H1 (cell line): ENCODE measurements at regions of chr7 and their contacts with region 1.

Region 1: GRCh38 chr7:155380221-155380861 is 77.6 kb upstream of the EN2 start:
- DNase-seq: peak in 1 of 2 experiments; percentile 81
- H3K4me3 ChIP-seq: no peak overlapping the region
- H3K27ac ChIP-seq: no peak overlapping the region
- H3K4me1 ChIP-seq: peaks cover 0 to 16% (median 9%) of the 10 kb centered on the region in 4 experiments; a peak in 5 of 7 replicates
- H3K27me3 ChIP-seq: peaks cover 92 to 97% (median 96%) of the 10 kb centered on the region in 4 experiments
- CTCF ChIP-seq: peak; percentile 61 to 79 (median 74)
- EP300 ChIP-seq: no peak
- POLR2A ChIP-seq: no peak
- RAD21 ChIP-seq: peak; percentile 69 to 71

Region 2: DNA sequence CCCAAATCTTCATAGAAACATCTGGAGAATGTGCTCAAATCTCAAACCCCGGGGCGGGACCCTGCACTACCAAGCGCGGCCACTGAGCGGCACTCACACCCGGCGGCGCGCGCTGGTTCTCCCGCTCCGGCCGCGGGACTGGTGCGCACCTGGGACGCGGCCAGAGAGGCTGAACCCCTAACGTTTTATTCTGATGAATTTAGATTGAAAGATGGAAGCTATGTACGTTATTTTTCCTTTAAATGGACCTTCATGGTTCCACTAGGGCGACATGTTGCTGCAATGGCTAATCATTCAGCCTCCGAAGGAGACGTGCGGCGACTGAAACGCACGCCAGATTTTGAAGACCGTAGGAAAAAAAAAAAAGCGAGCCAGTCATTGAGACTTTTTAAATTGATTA is 189.7 kb before region 1 on chr7:
- CTCF ChIA-PET with region 1: no interaction called
- POLR2A ChIA-PET with region 1: no interaction called
- DNase-seq: peak in 1 of 2 experiments; percentile 95
- H3K4me3 ChIP-seq: peak overlapping the region in 1 of 4 experiments; percentile 33; a peak in 1 of 8 replicates
- H3K27ac ChIP-seq: no peak overlapping the region
- H3K4me1 ChIP-seq: no peaks in the 10 kb centered on the region; a peak in 1 of 7 replicates
- H3K27me3 ChIP-seq: peaks cover 0 to 3% (median 0%) of the 10 kb centered on the region in 4 experiments; a peak in 1 of 7 replicates
- CTCF ChIP-seq: peak; percentile 73 to 86 (median 85)
- EP300 ChIP-seq: no peak
- POLR2A ChIP-seq: no peak
- RAD21 ChIP-seq: peak; percentile 79 to 93

Region 3: GRCh38 chr7:155392726-155393570 is 12.6 kb after region 1 on chr7:
- CTCF ChIA-PET with region 1: interaction called, 18 read pairs
- POLR2A ChIA-PET with region 1: no interaction called
- DNase-seq: no peak
- H3K4me3 ChIP-seq: no peak overlapping the region
- H3K27ac ChIP-seq: no peak overlapping the region
- H3K4me1 ChIP-seq: no peaks in the 10 kb centered on the region
- H3K27me3 ChIP-seq: no peaks in the 10 kb centered on the region; a peak in 2 of 7 replicates
- CTCF ChIP-seq: no peak
- EP300 ChIP-seq: no peak
- POLR2A ChIP-seq: no peak
- RAD21 ChIP-seq: no peak

Region 4: GRCh38 chr7:155412537-155413253 is 32.4 kb after region 1 on chr7:
- CTCF ChIA-PET with region 1: interaction called, 11 read pairs
- POLR2A ChIA-PET with region 1: no interaction called
- DNase-seq: peak in 1 of 2 experiments; percentile 87
- H3K4me3 ChIP-seq: no peak overlapping the region
- H3K27ac ChIP-seq: no peak overlapping the region
- H3K4me1 ChIP-seq: peaks cover 0 to 11% (median 5%) of the 10 kb centered on the region in 4 experiments; a peak in 6 of 7 replicates
- H3K27me3 ChIP-seq: peaks cover 0 to 4% (median 1%) of the 10 kb centered on the region in 4 experiments; a peak in 4 of 7 replicates
- CTCF ChIP-seq: peak in 2 of 3 experiments; percentile 80 to 88; a peak in 3 of 4 replicates
- EP300 ChIP-seq: no peak
- POLR2A ChIP-seq: no peak
- RAD21 ChIP-seq: peak; percentile 57 to 64

Region 5: DNA sequence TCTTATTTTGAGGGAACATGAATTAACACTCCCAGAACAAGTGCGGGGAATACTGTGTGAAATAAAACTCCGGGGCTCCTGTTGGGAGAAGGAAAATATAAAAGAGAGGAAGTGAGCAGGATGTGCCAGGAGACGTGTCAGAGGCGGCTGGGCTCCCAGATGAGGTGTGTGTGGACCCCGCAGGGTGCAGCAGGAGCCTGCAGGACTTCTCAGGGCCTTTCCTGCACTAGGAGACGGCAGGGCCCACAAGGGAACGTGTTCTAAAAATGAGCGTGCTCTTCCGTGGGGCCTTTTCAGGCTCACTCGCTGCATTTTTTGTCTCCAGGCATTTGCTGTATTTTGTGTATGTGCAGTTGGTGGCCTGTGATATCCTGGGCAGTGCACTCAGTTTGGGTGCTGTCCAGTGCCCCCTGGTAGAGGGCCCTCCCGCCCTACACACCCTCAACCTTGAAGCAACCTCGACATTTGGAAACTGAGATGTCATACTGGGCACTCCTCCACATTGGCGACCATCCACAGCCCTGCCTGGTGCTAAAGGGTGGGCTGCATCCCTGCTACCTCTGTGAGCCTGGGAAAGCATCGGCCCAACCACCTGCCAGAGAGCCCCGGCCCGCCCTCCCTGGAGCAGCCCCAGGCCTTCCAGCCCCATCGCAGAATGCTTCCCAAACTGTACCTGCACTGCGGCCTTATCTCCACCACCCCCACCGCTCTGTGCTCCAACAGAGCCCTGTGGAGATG is 42.4 kb after region 1 on chr7:
- CTCF ChIA-PET with region 1: interaction called, 10 read pairs
- POLR2A ChIA-PET with region 1: no interaction called
- DNase-seq: no peak
- H3K4me3 ChIP-seq: no peak overlapping the region
- H3K27ac ChIP-seq: no peak overlapping the region
- H3K4me1 ChIP-seq: no peaks in the 10 kb centered on the region; a peak in 1 of 7 replicates
- H3K27me3 ChIP-seq: no peaks in the 10 kb centered on the region; a peak in 3 of 7 replicates
- CTCF ChIP-seq: no peak
- EP300 ChIP-seq: no peak
- POLR2A ChIP-seq: no peak
- RAD21 ChIP-seq: no peak

Region 6: DNA sequence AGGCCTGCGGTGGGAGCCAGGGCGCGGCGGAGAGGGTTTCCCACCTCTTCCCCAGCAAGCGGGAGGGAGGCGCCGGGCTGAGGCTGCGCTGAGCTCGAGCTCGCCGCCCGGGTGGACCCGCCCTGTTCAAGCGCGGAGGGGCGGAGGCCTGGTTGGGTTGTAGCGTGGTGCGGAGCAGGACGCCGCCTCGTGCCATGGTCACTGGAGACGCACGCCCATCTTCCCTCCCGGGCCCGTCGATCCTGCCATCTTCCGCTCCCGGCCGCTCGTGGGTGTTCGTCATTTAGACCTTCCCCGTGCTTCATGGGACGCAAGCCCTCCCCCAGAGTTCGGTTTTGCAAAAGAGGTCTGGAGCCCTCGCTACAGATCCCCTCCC is 68.3 kb after region 1 on chr7:
- CTCF ChIA-PET with region 1: interaction called, 81 read pairs
- POLR2A ChIA-PET with region 1: interaction called, 7 read pairs
- DNase-seq: peak in 1 of 2 experiments; percentile 71
- H3K4me3 ChIP-seq: peak overlapping the region; percentile 5 to 53 (median 22); a peak in 5 of 8 replicates
- H3K27ac ChIP-seq: no peak overlapping the region
- H3K4me1 ChIP-seq: peaks cover 0 to 17% (median 12%) of the 10 kb centered on the region in 4 experiments; a peak in 6 of 7 replicates
- H3K27me3 ChIP-seq: peaks cover 70 to 94% (median 86%) of the 10 kb centered on the region in 4 experiments
- CTCF ChIP-seq: no peak
- EP300 ChIP-seq: no peak
- POLR2A ChIP-seq: no peak
- RAD21 ChIP-seq: no peak

Region 7: DNA sequence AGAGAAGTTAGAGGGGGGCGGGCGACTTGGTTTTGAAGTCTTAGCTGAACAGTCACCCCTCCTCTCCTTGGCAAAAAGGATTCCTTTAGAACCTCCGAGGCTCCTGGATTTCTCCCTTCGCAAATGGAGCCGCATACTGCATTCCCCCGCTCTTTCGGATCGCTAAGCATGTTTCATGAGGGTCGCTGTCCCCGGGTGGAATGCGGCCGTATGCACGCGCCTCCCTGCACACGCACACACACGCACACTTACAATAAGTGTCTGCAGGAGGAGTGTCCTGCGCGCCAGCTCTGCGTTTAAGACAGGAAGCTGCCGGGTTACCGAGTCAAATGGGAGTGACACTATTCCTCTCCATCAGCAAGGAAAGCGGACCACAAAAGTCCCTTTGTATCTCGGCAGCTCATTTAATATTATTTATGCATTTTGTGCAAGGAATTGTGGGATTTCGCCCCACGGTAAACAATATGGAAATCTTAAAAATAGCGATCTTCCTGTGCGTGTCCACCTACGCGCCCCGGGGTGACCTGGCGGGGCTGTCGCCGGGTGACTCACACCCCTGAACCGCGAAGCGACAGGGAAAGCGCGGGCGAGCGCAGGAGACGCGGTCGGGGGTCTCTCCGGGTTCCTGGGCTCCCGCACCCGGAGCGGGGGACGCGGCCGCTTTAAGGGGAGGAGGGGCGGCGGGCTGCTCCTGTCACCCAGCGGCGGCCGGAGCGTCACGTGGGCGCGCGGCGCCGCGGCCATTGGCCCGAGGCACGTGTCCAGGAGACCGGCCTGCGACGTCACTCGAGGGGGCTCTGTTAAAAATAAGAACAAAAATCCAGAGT is 76.6 kb after region 1 on chr7:
- CTCF ChIA-PET with region 1: interaction called, 81 read pairs
- POLR2A ChIA-PET with region 1: interaction called, 4 read pairs
- DNase-seq: peak in 1 of 2 experiments; percentile 81
- H3K4me3 ChIP-seq: peak overlapping the region in 1 of 4 experiments; percentile 45; a peak in 2 of 8 replicates
- H3K27ac ChIP-seq: no peak overlapping the region
- H3K4me1 ChIP-seq: peaks cover 0 to 16% (median 8%) of the 10 kb centered on the region in 4 experiments; a peak in 5 of 7 replicates
- H3K27me3 ChIP-seq: peaks cover 98 to 99% (median 98%) of the 10 kb centered on the region in 4 experiments
- CTCF ChIP-seq: no peak
- EP300 ChIP-seq: peak in 1 of 2 experiments; percentile 69; a peak in 1 of 3 replicates
- POLR2A ChIP-seq: no peak
- RAD21 ChIP-seq: no peak

Region 8: GRCh38 chr7:155533827-155534690 is 153.7 kb after region 1 on chr7:
- CTCF ChIA-PET with region 1: interaction called, 33 read pairs
- POLR2A ChIA-PET with region 1: no interaction called
- DNase-seq: peak; percentile 23 to 89
- H3K4me3 ChIP-seq: peak overlapping the region; percentile 17 to 55 (median 26); a peak in 4 of 8 replicates
- H3K27ac ChIP-seq: no peak overlapping the region
- H3K4me1 ChIP-seq: peaks cover 0 to 8% (median 7%) of the 10 kb centered on the region in 4 experiments; a peak in 5 of 7 replicates
- H3K27me3 ChIP-seq: peaks cover 29 to 68% (median 57%) of the 10 kb centered on the region in 4 experiments
- CTCF ChIP-seq: peak; percentile 79 to 91 (median 87)
- EP300 ChIP-seq: no peak
- POLR2A ChIP-seq: no peak
- RAD21 ChIP-seq: peak; percentile 70 to 83